Naive thymus-derived CD4-positive, alpha-beta T cell (primary cell): ENCODE measurements at regions of chr5 and their contacts with region 1.

Region 1: GRCh38 chr5:72847989-72848473 is 31.6 kb downstream of the TNPO1 start:
- DNase-seq: peak; percentile 67 to 86 (median 83)
- ATAC-seq: peak; percentile 94
- H3K4me3 ChIP-seq: peak overlapping the region; percentile 93
- H3K4me3 Mint-ChIP-seq: peak overlapping the region; percentile 92 to 99 (median 98)
- H3K27ac ChIP-seq: peak overlapping the region; percentile 86
- H3K27ac Mint-ChIP-seq: peak overlapping the region; percentile 93 to 98 (median 96)
- H3K4me1 ChIP-seq: peaks cover 24 to 31% of the 10 kb centered on the region in 2 donors
- H3K4me1 Mint-ChIP-seq: peaks cover 30 to 88% (median 64%) of the 10 kb centered on the region in 7 donors
- H3K27me3 ChIP-seq: no peaks in the 10 kb centered on the region
- H3K27me3 Mint-ChIP-seq: peaks cover 0 to 16% (median 0%) of the 10 kb centered on the region in 5 donors

Region 2: DNA sequence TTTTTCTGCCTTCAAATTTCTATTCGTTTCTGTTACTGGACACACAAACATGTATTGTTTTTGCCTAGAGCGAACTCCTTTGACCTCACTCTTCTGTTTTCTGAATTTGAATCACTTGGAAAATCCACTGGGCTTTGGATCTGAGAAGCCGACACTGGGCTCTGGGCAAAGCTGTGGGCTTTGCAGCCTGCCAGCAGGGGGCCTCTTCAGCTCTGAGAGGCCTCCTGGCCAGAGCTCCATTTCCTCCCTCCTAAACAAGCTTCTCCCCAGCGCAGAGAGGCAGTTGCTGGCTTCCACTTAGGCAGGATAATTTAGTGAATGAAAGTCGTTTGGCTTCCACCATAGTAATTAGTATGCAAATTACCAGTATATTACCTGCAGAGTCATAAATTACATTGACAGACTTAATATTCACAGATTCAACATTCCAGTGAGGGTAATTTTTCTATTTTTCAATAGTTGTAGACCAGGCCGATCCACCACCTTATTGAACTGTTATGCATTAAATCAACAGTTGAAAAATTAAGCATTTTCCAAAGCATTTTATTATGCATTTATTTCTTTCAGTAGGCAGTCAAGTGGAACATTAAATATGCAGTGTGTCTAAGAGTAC is 236.8 kb before region 1 on chr5:
- CTCF ChIA-PET with region 1: no interaction called
- POLR2A ChIA-PET with region 1: no interaction called
- intact Hi-C with region 1: loop called in 1 of 2 experiments (anchors 1 kb)
- DNase-seq: peak in 8 of 9 donors; percentile 8 to 43 (median 27)
- ATAC-seq: peak; percentile 76
- H3K4me3 ChIP-seq: no peak overlapping the region
- H3K4me3 Mint-ChIP-seq: no peak overlapping the region
- H3K27ac ChIP-seq: no peak overlapping the region
- H3K27ac Mint-ChIP-seq: no peak overlapping the region
- H3K4me1 ChIP-seq: no peaks in the 10 kb centered on the region
- H3K4me1 Mint-ChIP-seq: peaks cover 0 to 7% (median 5%) of the 10 kb centered on the region in 7 donors
- H3K27me3 ChIP-seq: no peaks in the 10 kb centered on the region
- H3K27me3 Mint-ChIP-seq: peaks cover 3 to 23% (median 15%) of the 10 kb centered on the region in 5 donors

Region 3: GRCh38 chr5:72692651-72693442 is 155.2 kb before region 1 on chr5:
- CTCF ChIA-PET with region 1: no interaction called
- POLR2A ChIA-PET with region 1: no interaction called
- intact Hi-C with region 1: no loop called
- DNase-seq: no peak
- ATAC-seq: no peak
- H3K4me3 ChIP-seq: no peak overlapping the region
- H3K4me3 Mint-ChIP-seq: no peak overlapping the region
- H3K27ac ChIP-seq: no peak overlapping the region
- H3K27ac Mint-ChIP-seq: no peak overlapping the region
- H3K4me1 ChIP-seq: no peaks in the 10 kb centered on the region
- H3K4me1 Mint-ChIP-seq: no peaks in the 10 kb centered on the region
- H3K27me3 ChIP-seq: no peaks in the 10 kb centered on the region
- H3K27me3 Mint-ChIP-seq: peaks cover 19 to 50% (median 44%) of the 10 kb centered on the region in 5 donors

Region 4: DNA sequence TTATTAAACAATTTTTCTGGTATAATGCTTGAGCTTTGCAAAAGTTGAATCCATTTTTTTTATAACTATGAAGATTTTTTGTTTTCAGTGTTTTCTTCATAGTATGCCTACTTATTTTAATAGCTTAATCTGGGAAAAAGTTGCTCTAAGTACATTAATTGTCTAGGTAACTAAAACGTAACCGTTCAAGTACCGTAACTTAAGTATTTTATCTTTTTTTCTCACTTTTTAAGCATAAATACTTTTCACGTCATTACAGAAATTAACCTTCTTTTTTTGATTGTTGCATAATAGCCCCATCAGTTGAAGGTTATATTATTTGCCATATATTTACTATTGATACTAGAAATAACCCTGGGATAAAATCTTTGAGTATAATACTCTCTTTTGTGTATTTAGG is 16.3 kb before region 1 on chr5:
- CTCF ChIA-PET with region 1: interaction called, 3 read pairs
- POLR2A ChIA-PET with region 1: interaction called, 3 read pairs
- intact Hi-C with region 1: loop called in 1 of 2 experiments (anchors 2 kb)
- DNase-seq: no peak
- ATAC-seq: no peak
- H3K4me3 ChIP-seq: no peak overlapping the region
- H3K4me3 Mint-ChIP-seq: no peak overlapping the region
- H3K27ac ChIP-seq: no peak overlapping the region
- H3K27ac Mint-ChIP-seq: no peak overlapping the region
- H3K4me1 ChIP-seq: no peaks in the 10 kb centered on the region
- H3K4me1 Mint-ChIP-seq: peaks cover 0 to 18% (median 6%) of the 10 kb centered on the region in 7 donors
- H3K27me3 ChIP-seq: no peaks in the 10 kb centered on the region
- H3K27me3 Mint-ChIP-seq: peaks cover 0 to 11% (median 0%) of the 10 kb centered on the region in 5 donors

Region 5: GRCh38 chr5:72871366-72872024 is 23.5 kb after region 1 on chr5:
- CTCF ChIA-PET with region 1: no interaction called
- POLR2A ChIA-PET with region 1: no interaction called
- intact Hi-C with region 1: loop called in 1 of 2 experiments (anchors 2 kb)
- DNase-seq: no peak
- ATAC-seq: no peak
- H3K4me3 ChIP-seq: no peak overlapping the region
- H3K4me3 Mint-ChIP-seq: no peak overlapping the region
- H3K27ac ChIP-seq: no peak overlapping the region
- H3K27ac Mint-ChIP-seq: peak overlapping the region in 4 of 9 donors; percentile 12 to 49 (median 34)
- H3K4me1 ChIP-seq: no peaks in the 10 kb centered on the region
- H3K4me1 Mint-ChIP-seq: peaks cover 5 to 42% (median 15%) of the 10 kb centered on the region in 7 donors
- H3K27me3 ChIP-seq: no peaks in the 10 kb centered on the region
- H3K27me3 Mint-ChIP-seq: no peaks in the 10 kb centered on the region